ENCODE measurements at regions of chr19 and their contacts with region 1.

Region 1: GRCh38 chr19:55624109-55625003 is at the start of gene ZNF784:
- DNase-seq: peak; percentile 83 to 94
- H3K4me3 ChIP-seq: peak within 1 kb of the TSS; percentile 62
- H3K27ac ChIP-seq: peak within 1 kb of the TSS; percentile 75
- H3K4me1 ChIP-seq: peaks cover 14% of the 10 kb centered on the region
- H3K27me3 ChIP-seq: no peaks in the 10 kb centered on the region
- CTCF ChIP-seq: no peak
- total RNA-seq, gene ZNF784: 5.4 and 7.7 TPM in 2 replicates

Region 2: GRCh38 chr19:54473021-54473891 is 1151.1 kb before region 1 on chr19 and contains the start of gene CDC42EP5:
- CTCF ChIA-PET with region 1: no interaction called
- POLR2A ChIA-PET with region 1: interaction called, 17 read pairs
- intact Hi-C with region 1: no loop called
- DNase-seq: peak in 1 of 2 experiments; percentile 60
- H3K4me3 ChIP-seq: no peak within 1 kb of the TSS
- H3K27ac ChIP-seq: no peak within 1 kb of the TSS
- H3K4me1 ChIP-seq: peaks cover 18% of the 10 kb centered on the region; the same call in 1 of the 2 replicates
- H3K27me3 ChIP-seq: peaks cover 18% of the 10 kb centered on the region; the same call in 1 of the 2 replicates
- CTCF ChIP-seq: no peak
- total RNA-seq, gene CDC42EP5: 25.1 and 48.5 TPM in 2 replicates

Region 3: GRCh38 chr19:55189424-55189823 is 434.9 kb before region 1 on chr19:
- CTCF ChIA-PET with region 1: no interaction called
- POLR2A ChIA-PET with region 1: interaction called, 12 read pairs
- intact Hi-C with region 1: no loop called
- DNase-seq: peak; percentile 90 to 91
- H3K4me3 ChIP-seq: no peak overlapping the region
- H3K27ac ChIP-seq: peak overlapping the region; percentile 75
- H3K4me1 ChIP-seq: peaks cover 15% of the 10 kb centered on the region; the same call in 1 of the 2 replicates
- H3K27me3 ChIP-seq: no peaks in the 10 kb centered on the region
- CTCF ChIP-seq: no peak

Region 4: GRCh38 chr19:55487632-55488152 is 136.7 kb before region 1 on chr19:
- CTCF ChIA-PET with region 1: interaction called, 10 read pairs
- POLR2A ChIA-PET with region 1: interaction called, 12 read pairs
- intact Hi-C with region 1: no loop called
- DNase-seq: peak; percentile 65 to 69
- H3K4me3 ChIP-seq: no peak overlapping the region
- H3K27ac ChIP-seq: 0 out of 2 replicates have a peak overlapping the region, but pooled peaks have one; percentile 2
- H3K4me1 ChIP-seq: peaks cover 21% of the 10 kb centered on the region
- H3K27me3 ChIP-seq: peaks cover 3% of the 10 kb centered on the region; the same call in 1 of the 2 replicates
- CTCF ChIP-seq: no peak

Region 5: DNA sequence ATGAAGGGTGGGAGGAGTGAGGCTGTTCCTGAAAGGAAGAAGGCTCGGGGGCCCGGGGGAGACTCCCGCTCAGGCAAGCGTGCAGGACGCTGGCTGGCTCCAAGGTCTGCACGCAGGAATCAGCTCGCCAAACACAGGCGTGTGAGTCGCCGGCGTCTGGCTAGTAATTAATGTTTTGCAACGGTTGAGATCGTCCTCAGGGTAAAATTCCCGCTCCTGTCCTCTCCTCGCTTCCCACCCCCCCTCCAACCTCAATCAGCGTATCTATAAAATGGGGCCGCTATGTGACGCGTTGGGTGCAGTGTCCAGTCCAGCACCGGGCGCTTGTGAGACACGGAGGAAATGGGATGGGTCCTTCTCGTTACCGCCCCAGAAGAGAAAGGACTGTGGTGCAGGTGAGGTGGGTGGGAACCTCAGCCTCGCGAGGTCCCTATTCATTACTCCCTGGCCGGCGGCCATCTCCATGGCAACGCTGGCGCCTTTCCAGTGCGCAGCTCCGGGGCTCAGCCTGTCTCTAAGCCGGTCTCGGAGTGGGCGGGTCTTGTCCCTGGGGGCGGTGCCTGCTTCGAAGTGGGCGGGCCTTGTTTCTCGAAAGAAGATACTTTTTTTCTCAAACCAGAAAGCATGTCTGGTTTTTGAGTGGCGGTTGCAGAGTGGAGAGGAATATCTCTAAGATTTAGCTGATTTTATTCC is 37.2 kb before region 1 on chr19:
- CTCF ChIA-PET with region 1: interaction called, 5 read pairs
- POLR2A ChIA-PET with region 1: no interaction called
- intact Hi-C with region 1: loop called (anchors 1 kb)
- DNase-seq: peak; percentile 96 to 100
- H3K4me3 ChIP-seq: peak overlapping the region; percentile 57
- H3K27ac ChIP-seq: peak overlapping the region; percentile 11; the same call in 1 of the 2 replicates
- H3K4me1 ChIP-seq: peaks cover 10% of the 10 kb centered on the region
- H3K27me3 ChIP-seq: 0 out of 2 replicates have a peak, but pooled peaks cover 5% of the 10 kb centered on the region
- CTCF ChIP-seq: no peak

Region 6: DNA sequence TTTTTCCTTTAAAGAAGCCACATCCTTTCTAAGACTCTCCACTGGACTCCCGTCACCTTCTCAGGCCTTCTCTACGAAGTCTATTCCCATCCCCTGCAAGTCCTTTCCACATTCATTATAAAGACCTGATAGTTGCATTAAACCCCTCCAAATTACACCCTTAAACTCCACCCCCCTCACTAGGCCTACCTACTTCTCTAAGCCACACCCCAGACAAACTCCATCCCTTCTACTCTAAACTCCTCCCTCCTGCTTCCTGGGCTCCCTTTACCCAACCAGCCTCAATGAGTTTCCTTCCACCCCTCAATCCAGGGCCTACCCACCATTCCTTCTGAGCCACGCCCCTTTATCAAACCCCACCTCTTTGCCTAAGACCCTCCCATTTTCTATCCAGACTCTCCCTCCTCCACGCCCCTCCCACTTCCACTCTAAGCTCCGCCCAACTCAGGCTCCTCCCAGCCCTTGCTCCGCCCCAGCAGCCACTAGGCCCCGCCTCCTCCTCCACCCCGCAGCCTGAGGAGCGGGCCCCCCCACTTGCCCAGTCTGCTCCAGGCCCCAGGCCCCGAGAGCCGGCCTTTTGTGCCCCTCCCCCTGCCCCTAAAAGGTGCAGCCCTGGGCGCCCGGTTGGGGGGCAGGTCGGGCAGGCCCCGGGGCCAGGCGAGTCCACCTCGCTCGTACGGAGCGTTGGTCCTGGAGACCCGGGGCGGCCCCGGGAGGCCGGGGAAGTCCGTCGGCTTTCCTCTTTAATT is 25.5 kb before region 1 on chr19:
- CTCF ChIA-PET with region 1: no interaction called
- POLR2A ChIA-PET with region 1: no interaction called
- intact Hi-C with region 1: no loop called
- DNase-seq: peak; percentile 91 to 99
- H3K4me3 ChIP-seq: peak overlapping the region; percentile 91; the same call in 1 of the 2 replicates
- H3K27ac ChIP-seq: peak overlapping the region; percentile 94
- H3K4me1 ChIP-seq: 0 out of 2 replicates have a peak, but pooled peaks cover 14% of the 10 kb centered on the region
- H3K27me3 ChIP-seq: no peaks in the 10 kb centered on the region
- CTCF ChIP-seq: no peak

Region 7: DNA sequence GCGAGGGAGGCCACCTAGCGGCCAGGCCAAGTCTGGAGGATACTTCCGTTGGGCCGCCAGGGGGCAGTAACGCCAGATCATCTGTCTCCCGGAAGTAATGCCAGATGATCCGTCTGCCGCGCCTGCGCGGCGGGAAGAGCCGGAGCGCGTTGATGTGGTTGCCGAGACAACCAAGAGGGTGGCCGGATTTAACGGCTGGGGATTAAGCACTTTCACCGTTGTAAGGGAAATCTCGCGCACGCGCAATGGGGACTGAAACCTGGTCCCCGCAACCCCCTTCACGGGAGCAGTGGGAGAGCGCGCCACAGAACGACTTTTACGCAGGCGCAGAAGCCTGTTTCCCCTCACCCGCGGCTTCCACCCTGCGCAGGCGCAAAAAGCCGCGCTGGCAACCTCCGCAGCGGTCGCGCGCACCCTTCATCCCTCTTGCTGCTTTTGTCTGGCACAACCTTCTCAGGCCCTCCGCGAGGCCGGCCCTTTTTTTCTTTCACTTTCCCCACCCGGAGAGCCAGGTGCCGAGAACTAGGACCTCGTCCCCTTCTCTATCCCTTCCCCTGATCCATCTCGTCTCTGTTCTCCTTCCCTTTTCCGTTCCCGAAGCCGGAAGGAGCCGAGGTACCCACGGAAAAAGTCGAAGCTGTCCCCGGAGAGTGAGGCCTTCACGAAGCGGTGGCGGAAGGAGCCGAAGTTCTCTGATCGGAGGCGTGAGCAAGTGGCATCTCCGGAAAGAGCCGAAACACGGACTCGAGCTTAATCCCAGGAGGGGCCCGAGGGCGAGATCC is 29.6 kb after region 1 on chr19:
- CTCF ChIA-PET with region 1: no interaction called
- POLR2A ChIA-PET with region 1: no interaction called
- intact Hi-C with region 1: no loop called
- DNase-seq: peak; percentile 99 to 100
- H3K4me3 ChIP-seq: peak overlapping the region; percentile 72
- H3K27ac ChIP-seq: peak overlapping the region; percentile 95
- H3K4me1 ChIP-seq: peaks cover 25% of the 10 kb centered on the region
- H3K27me3 ChIP-seq: no peaks in the 10 kb centered on the region
- CTCF ChIP-seq: peak; percentile 97